Endothelial cell of umbilical vein (primary cell): ENCODE measurements at regions of chr13 and their contacts with region 1.

Region 1: GRCh38 chr13:36818804-36819738 is at the start of gene RFXAP:
- DNase-seq: peak; percentile 88
- H3K4me3 ChIP-seq: peak within 1 kb of the TSS; percentile 62 to 93 (median 83)
- H3K27ac ChIP-seq: peak within 1 kb of the TSS; percentile 44
- H3K4me1 ChIP-seq: peaks cover 35% of the 10 kb centered on the region
- H3K27me3 ChIP-seq: no peaks in the 10 kb centered on the region
- CTCF ChIP-seq: peak in 1 of 2 donors; percentile 17
- POLR2A ChIP-seq: peak; percentile 48
- total RNA-seq, gene RFXAP: 7.2 and 9.0 TPM in 2 replicates

Region 2: GRCh38 chr13:36297366-36298338 is 521.4 kb before region 1 on chr13 and contains the start of gene CCDC169:
- CTCF ChIA-PET with region 1: no interaction called
- POLR2A ChIA-PET with region 1: no interaction called
- dilution Hi-C with region 1: no loop called
- intact Hi-C with region 1: loop called (anchors 5 kb)
- DNase-seq: peak; percentile 85
- H3K4me3 ChIP-seq: peak within 1 kb of the TSS; percentile 31 to 69 (median 59)
- H3K27ac ChIP-seq: peak within 1 kb of the TSS; percentile 17
- H3K4me1 ChIP-seq: peaks cover 18% of the 10 kb centered on the region
- H3K27me3 ChIP-seq: no peaks in the 10 kb centered on the region
- CTCF ChIP-seq: no peak
- POLR2A ChIP-seq: peak; percentile 84
- total RNA-seq, gene CCDC169: 2.5 and 5.3 TPM in 2 replicates

Region 3: GRCh38 chr13:36420437-36420891 is 398.6 kb before region 1 on chr13:
- CTCF ChIA-PET with region 1: interaction called, 3 read pairs
- POLR2A ChIA-PET with region 1: no interaction called
- dilution Hi-C with region 1: no loop called
- intact Hi-C with region 1: loop called (anchors 10 kb)
- DNase-seq: peak; percentile 84
- H3K4me3 ChIP-seq: no peak overlapping the region
- H3K27ac ChIP-seq: no peak overlapping the region
- H3K4me1 ChIP-seq: peaks cover 32% of the 10 kb centered on the region
- H3K27me3 ChIP-seq: no peaks in the 10 kb centered on the region
- CTCF ChIP-seq: peak; percentile 86 to 91
- POLR2A ChIP-seq: no peak

Region 4: GRCh38 chr13:36530050-36530789 is 288.9 kb before region 1 on chr13:
- CTCF ChIA-PET with region 1: no interaction called
- POLR2A ChIA-PET with region 1: no interaction called
- dilution Hi-C with region 1: no loop called
- intact Hi-C with region 1: loop called (anchors 5 kb)
- DNase-seq: peak; percentile 20
- H3K4me3 ChIP-seq: no peak overlapping the region
- H3K27ac ChIP-seq: no peak overlapping the region
- H3K4me1 ChIP-seq: peaks cover 47% of the 10 kb centered on the region
- H3K27me3 ChIP-seq: no peaks in the 10 kb centered on the region
- CTCF ChIP-seq: no peak
- POLR2A ChIP-seq: no peak

Region 5: GRCh38 chr13:36758345-36758744 is 60.7 kb before region 1 on chr13:
- CTCF ChIA-PET with region 1: no interaction called
- POLR2A ChIA-PET with region 1: no interaction called
- dilution Hi-C with region 1: no loop called
- intact Hi-C with region 1: loop called (anchors 10 kb)
- DNase-seq: no peak
- H3K4me3 ChIP-seq: no peak overlapping the region
- H3K27ac ChIP-seq: no peak overlapping the region
- H3K4me1 ChIP-seq: no peaks in the 10 kb centered on the region
- H3K27me3 ChIP-seq: peaks cover 0 to 2% of the 10 kb centered on the region in 2 experiments
- CTCF ChIP-seq: no peak
- POLR2A ChIP-seq: no peak

Region 6: DNA sequence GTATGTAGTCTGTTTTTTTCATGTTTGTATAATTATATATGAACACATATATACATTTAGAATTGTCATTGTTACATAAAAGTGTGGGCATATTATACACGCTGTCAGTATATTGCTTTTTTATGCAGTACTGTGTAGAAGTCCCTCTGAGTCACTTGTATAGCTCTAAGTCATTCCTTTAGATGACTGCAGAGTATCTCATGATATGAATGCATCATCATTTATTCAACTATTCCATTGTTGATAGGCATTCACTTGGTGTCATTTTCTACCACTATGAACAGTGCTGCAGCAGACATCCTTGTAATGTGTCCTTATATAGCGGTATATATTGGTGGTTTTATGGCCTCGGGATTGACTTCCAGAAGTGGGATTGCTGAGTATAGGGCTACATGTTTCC is 15.2 kb after region 1 on chr13:
- CTCF ChIA-PET with region 1: no interaction called
- POLR2A ChIA-PET with region 1: no interaction called
- dilution Hi-C with region 1: no loop called
- intact Hi-C with region 1: no loop called
- DNase-seq: no peak
- H3K4me3 ChIP-seq: no peak overlapping the region
- H3K27ac ChIP-seq: no peak overlapping the region
- H3K4me1 ChIP-seq: no peaks in the 10 kb centered on the region
- H3K27me3 ChIP-seq: no peaks in the 10 kb centered on the region
- CTCF ChIP-seq: no peak
- POLR2A ChIP-seq: no peak

Region 7: GRCh38 chr13:37109051-37109678 is 290.1 kb after region 1 on chr13:
- CTCF ChIA-PET with region 1: no interaction called
- POLR2A ChIA-PET with region 1: no interaction called
- dilution Hi-C with region 1: no loop called
- intact Hi-C with region 1: no loop called
- DNase-seq: peak; percentile 76
- H3K4me3 ChIP-seq: no peak overlapping the region
- H3K27ac ChIP-seq: no peak overlapping the region
- H3K4me1 ChIP-seq: no peaks in the 10 kb centered on the region
- H3K27me3 ChIP-seq: peaks cover 0 to 2% of the 10 kb centered on the region in 2 experiments
- CTCF ChIP-seq: peak; percentile 38 to 47
- POLR2A ChIP-seq: no peak

Region 8: GRCh38 chr13:38349390-38350113 is 1530.5 kb after region 1 on chr13 and contains the start of gene UFM1:
- CTCF ChIA-PET with region 1: no interaction called
- POLR2A ChIA-PET with region 1: no interaction called
- dilution Hi-C with region 1: no loop called
- intact Hi-C with region 1: loop called (anchors 10 kb)
- DNase-seq: peak; percentile 96
- H3K4me3 ChIP-seq: peak within 1 kb of the TSS; percentile 61 to 95 (median 89)
- H3K27ac ChIP-seq: peak within 1 kb of the TSS; percentile 97
- H3K4me1 ChIP-seq: peaks cover 18% of the 10 kb centered on the region
- H3K27me3 ChIP-seq: no peaks in the 10 kb centered on the region
- CTCF ChIP-seq: no peak
- POLR2A ChIP-seq: peak; percentile 83
- total RNA-seq, gene UFM1: 41.0 and 51.5 TPM in 2 replicates